Activated naive CD4-positive, alpha-beta T cell treated with anti-CD3 and anti-CD28 coated beads, Interleukin-2, amount 10 ng/mL, durations not matched to agents 7 days and 5 days (primary cell): ENCODE measurements at regions of chr11 and their contacts with region 1.

Region 1: GRCh38 chr11:12235947-12236743 is 125.8 kb downstream of the MICAL2 start:
- DNase-seq: peak; percentile 65
- H3K4me3 Mint-ChIP-seq: peak overlapping the region; percentile 39
- H3K27ac Mint-ChIP-seq: peak overlapping the region; percentile 85
- H3K4me1 Mint-ChIP-seq: peaks cover 32% of the 10 kb centered on the region
- H3K27me3 Mint-ChIP-seq: no peaks in the 10 kb centered on the region

Region 2: DNA sequence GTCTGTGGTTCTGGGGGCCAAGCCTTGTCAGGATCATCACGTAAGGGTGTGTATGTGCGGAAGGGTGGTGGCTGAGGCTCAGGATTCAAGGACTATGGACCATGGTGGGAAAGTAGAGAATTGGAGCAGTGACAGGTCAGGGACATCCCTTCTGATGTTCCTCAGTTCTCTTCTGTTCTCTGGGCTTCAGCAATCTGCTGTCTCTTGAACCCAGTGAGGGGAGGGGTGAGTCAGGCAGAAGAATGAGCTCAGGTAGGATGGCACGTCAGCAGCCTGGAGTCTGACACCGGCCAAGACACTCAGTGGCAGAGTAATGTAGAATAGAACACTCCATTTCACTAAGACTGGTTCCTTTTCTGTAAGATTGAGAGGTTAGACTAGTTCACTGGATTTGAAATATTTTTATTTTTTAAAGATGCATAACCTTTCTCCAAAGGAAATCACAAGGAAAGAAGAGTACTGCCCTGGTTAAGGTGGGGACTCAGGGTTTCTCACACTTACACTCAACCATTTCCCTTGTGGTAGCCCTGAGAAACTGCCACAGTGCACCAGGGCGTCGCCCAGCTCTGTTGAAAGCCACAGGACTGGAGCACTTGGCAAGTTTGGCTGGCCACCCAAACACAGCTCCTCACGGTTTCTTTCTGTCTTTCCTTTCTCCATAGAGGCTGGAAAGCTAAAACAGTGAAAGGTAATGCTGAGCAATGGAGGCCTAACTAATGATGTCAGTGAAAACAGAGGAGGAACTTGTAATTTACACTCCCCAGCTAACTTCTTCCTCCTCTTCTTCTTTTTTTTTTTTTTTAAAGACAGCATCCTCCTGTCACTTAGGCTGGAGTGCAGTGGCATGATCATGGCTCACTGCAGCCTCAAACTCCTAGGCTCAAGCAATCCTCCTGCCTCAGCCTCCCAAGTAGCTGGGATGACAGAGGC is 148.8 kb before region 1 on chr11:
- CTCF ChIA-PET with region 1: interaction called, 28 read pairs
- DNase-seq: peak; percentile 75
- H3K4me3 Mint-ChIP-seq: peak overlapping the region; percentile 56
- H3K27ac Mint-ChIP-seq: peak overlapping the region; percentile 87
- H3K4me1 Mint-ChIP-seq: peaks cover 70% of the 10 kb centered on the region
- H3K27me3 Mint-ChIP-seq: no peaks in the 10 kb centered on the region

Region 3: DNA sequence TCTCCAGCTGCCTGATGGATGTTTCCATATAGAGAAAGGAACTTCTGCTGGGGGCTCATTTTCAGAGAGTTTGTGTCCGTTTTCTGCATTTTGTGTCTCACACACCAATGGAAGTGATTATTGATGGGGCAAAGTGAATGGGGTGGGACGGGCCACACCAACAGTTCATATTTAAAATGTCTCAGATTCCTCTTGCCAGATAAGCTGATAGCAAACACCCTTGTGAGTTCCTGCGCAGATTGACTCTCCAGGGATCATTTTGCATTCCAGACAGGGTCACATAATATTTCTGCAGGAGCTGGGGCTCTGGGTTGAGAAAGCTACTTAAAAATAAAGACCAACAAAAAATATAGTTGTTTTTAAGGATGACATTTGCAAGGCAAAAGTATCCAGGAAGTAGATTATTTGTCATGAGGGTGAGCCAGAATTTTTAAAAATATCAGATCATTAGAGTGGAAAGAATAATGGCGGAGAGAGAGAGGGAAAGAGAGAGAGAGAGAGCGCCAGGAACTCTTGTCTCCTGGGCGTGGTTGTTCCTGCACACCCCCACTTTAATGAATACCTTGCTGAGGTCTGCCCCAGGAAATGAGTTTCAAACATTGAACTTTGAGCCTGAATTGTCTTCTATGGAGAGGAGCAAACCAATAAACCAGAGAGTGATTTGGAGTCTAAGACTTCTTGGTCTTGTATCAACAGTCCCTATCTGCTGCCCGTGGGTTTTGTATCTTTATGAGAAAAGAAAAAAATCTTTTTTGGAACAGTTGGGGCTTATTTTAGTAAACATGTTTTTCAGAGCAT is 92.5 kb before region 1 on chr11:
- CTCF ChIA-PET with region 1: interaction called, 12 read pairs
- DNase-seq: no peak
- H3K4me3 Mint-ChIP-seq: no peak overlapping the region
- H3K27ac Mint-ChIP-seq: peak overlapping the region; percentile 82
- H3K4me1 Mint-ChIP-seq: peaks cover 62% of the 10 kb centered on the region
- H3K27me3 Mint-ChIP-seq: no peaks in the 10 kb centered on the region

Region 4: DNA sequence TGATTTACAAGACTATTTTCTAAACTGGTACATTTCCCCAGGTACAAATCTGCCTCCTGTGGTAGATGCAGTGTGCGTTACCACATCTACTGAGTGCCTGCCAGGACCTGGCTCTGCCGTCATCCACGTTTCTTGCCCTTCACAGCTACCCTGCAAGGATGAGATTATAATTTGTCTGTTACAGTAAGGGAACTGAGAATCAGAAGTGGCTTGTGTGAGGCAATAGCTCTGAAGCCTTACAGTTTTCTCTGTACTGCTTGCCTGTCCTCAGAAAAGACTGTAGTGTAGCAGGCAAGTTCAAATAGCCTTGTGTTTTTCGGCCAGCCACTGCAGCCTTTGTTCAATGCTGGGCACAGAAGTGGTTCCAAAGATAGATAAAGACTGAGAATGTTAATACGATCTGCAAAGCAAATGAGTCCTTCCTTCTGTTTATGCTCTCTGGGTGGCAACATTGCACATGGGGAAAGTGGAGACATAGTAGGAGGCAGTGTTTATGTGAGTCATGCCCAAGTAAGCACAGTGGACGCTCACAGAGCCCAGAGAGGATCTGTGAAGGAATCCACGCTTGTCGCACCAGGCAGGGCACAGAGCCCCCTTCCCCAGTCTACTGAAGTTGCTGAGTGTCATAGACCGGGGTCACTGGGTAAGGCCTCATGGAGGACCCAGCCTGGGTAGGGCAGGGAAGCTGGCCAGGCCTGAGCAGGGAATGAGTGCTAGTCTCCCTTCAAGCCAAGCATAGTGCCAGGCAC is 76.6 kb before region 1 on chr11:
- CTCF ChIA-PET with region 1: interaction called, 19 read pairs
- DNase-seq: no peak
- H3K4me3 Mint-ChIP-seq: no peak overlapping the region
- H3K27ac Mint-ChIP-seq: no peak overlapping the region
- H3K4me1 Mint-ChIP-seq: peaks cover 52% of the 10 kb centered on the region
- H3K27me3 Mint-ChIP-seq: no peaks in the 10 kb centered on the region

Region 5: DNA sequence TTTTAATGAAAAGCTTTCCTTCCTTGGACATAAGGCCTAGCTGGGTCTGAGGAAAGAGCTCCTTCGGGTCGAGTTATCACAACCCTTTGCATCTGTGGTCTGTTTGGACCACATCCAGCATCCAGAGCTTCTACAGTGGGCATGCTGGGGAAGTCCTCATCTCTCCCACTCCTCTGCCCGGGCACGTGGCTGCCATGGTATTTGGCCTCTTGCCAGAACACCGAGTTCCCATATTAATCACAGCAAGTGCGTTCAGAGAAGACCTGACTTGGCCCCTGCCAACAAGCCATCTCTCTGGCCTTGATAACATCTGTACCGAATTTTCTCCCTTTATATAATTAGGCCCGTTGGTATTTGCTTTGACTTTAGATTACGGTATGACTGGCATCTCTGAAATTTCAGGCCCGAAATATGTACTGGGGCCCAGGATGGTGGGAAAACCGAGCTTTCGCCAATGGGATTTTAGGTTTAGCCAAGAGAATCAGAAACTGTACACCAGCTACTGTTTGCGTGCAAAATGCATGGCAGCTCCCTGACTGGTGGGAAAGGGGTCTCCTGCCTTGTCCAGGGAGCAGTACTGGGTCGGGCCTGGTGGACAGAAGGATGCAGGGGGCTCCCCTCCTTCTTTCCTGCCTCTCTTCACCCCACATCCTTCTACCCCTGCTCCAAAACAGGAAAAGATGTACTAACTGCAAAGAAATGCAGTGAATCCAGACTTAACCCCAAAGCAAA is 35.7 kb before region 1 on chr11:
- CTCF ChIA-PET with region 1: interaction called, 49 read pairs
- DNase-seq: no peak
- H3K4me3 Mint-ChIP-seq: no peak overlapping the region
- H3K27ac Mint-ChIP-seq: no peak overlapping the region
- H3K4me1 Mint-ChIP-seq: peaks cover 45% of the 10 kb centered on the region
- H3K27me3 Mint-ChIP-seq: no peaks in the 10 kb centered on the region

Region 6: GRCh38 chr11:12281571-12282478 is 45.7 kb after region 1 on chr11:
- CTCF ChIA-PET with region 1: interaction called, 19 read pairs
- DNase-seq: peak; percentile 82
- H3K4me3 Mint-ChIP-seq: no peak overlapping the region
- H3K27ac Mint-ChIP-seq: no peak overlapping the region
- H3K4me1 Mint-ChIP-seq: no peaks in the 10 kb centered on the region
- H3K27me3 Mint-ChIP-seq: peaks cover 10% of the 10 kb centered on the region

Region 7: DNA sequence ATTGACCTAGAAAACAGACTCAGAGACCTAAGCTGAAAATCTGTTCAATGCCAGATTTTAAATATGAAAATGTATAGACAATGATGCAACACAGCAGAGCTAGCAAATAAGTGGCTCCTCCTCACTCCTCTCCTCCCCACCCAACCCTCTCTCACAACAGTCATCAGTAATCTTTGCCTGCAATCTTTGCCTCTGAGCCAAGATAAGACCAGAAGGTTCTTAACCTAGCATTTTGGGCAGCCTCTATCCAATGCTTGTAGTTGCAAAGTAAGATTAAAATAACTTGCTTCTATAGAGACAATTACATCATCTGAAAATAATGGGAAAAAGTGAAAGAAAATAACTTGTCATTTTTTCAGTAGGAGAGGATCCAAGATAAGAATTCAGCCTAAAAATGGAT is 258.6 kb after region 1 on chr11:
- CTCF ChIA-PET with region 1: no interaction called
- DNase-seq: no peak
- H3K4me3 Mint-ChIP-seq: no peak overlapping the region
- H3K27ac Mint-ChIP-seq: no peak overlapping the region
- H3K4me1 Mint-ChIP-seq: no peaks in the 10 kb centered on the region
- H3K27me3 Mint-ChIP-seq: peaks cover 8% of the 10 kb centered on the region